ENCODE measurements at regions of chr3 and their contacts with region 1.

Region 1: DNA sequence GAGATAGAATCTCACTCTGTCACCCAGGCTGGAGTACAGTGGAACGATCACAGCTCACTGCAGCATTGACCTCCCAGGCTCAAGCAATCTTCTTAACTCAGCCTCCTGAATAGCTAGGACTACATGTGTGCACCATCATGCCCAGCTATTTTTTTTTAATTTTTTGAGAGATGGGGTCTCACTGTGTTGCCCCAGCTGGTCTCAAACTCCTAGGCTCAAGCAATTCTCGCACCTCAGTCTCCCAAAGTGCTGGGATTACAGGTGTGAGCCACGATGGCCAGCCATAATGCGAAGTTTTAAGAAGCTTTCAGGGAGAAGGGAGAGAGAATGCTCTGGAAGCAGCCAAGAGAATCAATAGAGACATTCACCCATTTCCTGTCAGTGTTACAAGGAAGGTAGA is 42.7 kb downstream of the PRKAR2A start:
- DNase-seq: no peak
- ATAC-seq: no peak
- H3K4me3 ChIP-seq: no peak overlapping the region
- H3K27ac ChIP-seq: no peak overlapping the region
- H3K4me1 ChIP-seq: peaks cover 0 to 9% (median 0%) of the 10 kb centered on the region in 12 donors
- H3K27me3 ChIP-seq: no peaks in the 10 kb centered on the region
- CTCF ChIP-seq: no peak
- POLR2A ChIP-seq: no peak

Region 2: DNA sequence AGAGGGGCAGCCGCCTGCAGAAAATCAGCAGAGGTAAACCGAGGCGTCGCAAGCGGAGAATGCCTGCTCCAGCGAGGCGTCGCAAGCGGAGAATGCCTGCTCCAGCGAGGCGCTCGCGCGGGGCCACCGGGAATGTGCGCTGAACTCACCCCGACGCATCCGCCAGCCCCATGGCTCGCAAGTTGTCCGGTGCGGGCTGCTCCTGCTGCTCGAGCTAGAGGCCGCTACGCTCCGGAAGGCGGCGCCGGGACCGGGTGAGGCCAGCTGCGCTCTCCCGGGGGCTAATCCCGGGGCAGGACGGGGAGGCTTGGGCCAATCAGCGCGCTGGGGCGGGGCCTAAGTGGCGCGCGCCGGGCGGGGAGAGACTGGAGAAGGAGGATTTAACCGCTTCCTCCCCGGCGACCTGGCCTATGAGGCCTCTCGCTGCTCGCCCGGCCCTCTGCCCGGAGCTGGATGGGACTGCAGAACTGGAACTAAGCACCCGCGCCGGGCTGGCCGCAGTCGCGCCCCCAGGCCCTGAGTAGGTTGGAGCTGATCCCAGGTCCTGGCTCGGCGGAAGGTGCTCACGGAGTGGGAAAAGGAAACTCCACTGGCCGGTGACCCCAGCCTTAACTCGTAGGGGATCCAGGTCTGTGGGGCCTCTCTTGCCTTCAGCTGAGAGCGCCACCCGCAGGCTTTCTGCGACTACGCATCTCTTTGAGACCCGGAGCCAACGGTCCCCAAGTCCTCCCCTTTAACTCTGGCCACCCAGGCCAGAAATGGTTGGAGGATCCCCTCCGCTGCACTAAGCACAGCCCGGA is 169.5 kb before region 1 on chr3 and contains the start of gene SLC26A6:
- intact Hi-C with region 1: no loop called
- DNase-seq: peak; percentile 97 to 99 (median 98)
- ATAC-seq: peak; percentile 98 to 99 (median 98)
- H3K4me3 ChIP-seq: peak within 1 kb of the TSS; percentile 64 to 96 (median 86)
- H3K27ac ChIP-seq: peak within 1 kb of the TSS; percentile 28 to 90 (median 86)
- H3K4me1 ChIP-seq: peaks cover 0 to 28% (median 19%) of the 10 kb centered on the region in 12 donors
- H3K27me3 ChIP-seq: no peaks in the 10 kb centered on the region
- CTCF ChIP-seq: peak in 10 of 12 donors; percentile 5 to 67 (median 45)
- POLR2A ChIP-seq: peak in 1 of 2 donors; percentile 62
- total RNA-seq, gene SLC26A6: 6.7 to 14.6 (median 9.2) TPM

Region 3: GRCh38 chr3:48877671-48878070 is 72.7 kb after region 1 on chr3:
- intact Hi-C with region 1: loop called in 1 of 10 experiments (anchors 10 kb)
- DNase-seq: no peak
- ATAC-seq: no peak
- H3K4me3 ChIP-seq: no peak overlapping the region
- H3K27ac ChIP-seq: no peak overlapping the region
- H3K4me1 ChIP-seq: peaks cover 0 to 18% (median 6%) of the 10 kb centered on the region in 12 donors
- H3K27me3 ChIP-seq: no peaks in the 10 kb centered on the region
- CTCF ChIP-seq: no peak
- POLR2A ChIP-seq: no peak

Measured in heart left ventricle (tissue), 16 donors.